Activated CD4-positive, alpha-beta T cell treated with anti-CD3 and anti-CD28 coated beads, Interleukin-2, amount 10 ng/mL, durations not matched to agents 24 days and 14 days (primary cell): ENCODE measurements at regions of chrX and their contacts with region 1.

Region 1: GRCh38 chrX:65706041-65706828 is 38.8 kb downstream of the MSN start:
- DNase-seq: peak; percentile 66
- H3K4me3 Mint-ChIP-seq: peak overlapping the region; percentile 51
- H3K27ac Mint-ChIP-seq: peak overlapping the region; percentile 92
- H3K4me1 Mint-ChIP-seq: peaks cover 49% of the 10 kb centered on the region
- H3K27me3 Mint-ChIP-seq: no peaks in the 10 kb centered on the region

Region 2: DNA sequence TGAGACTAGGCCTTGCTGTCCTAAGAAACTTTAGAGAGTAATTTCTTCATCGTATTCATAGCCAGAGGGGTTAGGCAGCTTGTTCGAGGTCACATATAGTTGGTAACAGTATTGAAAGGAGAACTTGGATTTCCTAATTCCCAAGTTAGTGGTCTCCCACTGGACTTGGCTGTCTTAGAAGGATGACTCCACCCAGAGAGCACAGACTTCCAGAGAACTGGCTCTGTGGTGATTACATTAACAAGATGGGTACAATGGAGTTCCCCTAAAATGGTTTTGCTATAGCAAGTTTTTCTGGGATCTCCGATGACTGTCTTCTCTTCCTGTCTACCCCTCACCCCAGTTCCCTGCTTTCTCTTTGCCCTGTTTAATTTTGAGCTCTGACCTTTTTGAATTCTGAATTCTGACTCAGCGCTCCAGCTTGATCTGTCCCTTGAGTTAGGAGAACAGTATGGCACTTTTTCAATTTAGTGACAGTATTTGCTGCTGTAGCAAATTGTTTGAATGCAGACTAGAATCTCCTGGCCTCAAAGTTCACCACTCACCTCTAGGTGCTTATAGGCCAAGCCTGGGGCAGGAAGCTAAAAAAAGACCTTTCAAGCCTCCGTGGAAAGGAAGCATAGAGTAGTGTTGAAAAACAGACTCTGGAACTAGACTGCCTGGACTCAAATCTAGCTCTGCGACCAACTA is 31.9 kb before region 1 on chrX:
- intact Hi-C with region 1: loop called (anchors 1 kb)
- DNase-seq: peak; percentile 73
- H3K4me3 Mint-ChIP-seq: peak overlapping the region; percentile 97
- H3K27ac Mint-ChIP-seq: peak overlapping the region; percentile 88
- H3K4me1 Mint-ChIP-seq: peaks cover 58% of the 10 kb centered on the region
- H3K27me3 Mint-ChIP-seq: no peaks in the 10 kb centered on the region

Region 3: DNA sequence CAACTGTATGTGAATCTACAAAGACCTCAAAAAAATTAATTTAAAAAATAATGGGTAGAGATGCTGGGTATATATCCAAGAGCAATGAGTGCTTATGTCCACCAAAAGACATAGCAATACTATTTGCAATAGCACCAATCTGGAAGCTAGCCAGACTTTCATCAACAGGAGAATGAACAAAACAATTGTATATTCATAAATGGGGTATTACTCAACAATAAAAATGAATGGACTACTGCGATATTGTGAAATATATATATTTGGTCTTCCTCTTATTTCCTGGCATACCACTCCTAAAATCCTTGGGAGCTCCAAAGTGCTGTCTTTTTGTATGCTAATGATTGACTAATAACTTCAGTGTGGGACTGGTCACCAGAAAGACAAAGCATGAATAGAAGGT is 38.7 kb after region 1 on chrX:
- intact Hi-C with region 1: loop called (anchors 5 kb)
- DNase-seq: no peak
- H3K4me3 Mint-ChIP-seq: no peak overlapping the region
- H3K27ac Mint-ChIP-seq: no peak overlapping the region
- H3K4me1 Mint-ChIP-seq: peaks cover 36% of the 10 kb centered on the region
- H3K27me3 Mint-ChIP-seq: no peaks in the 10 kb centered on the region

Region 4: GRCh38 chrX:66030505-66031317 is 324.5 kb after region 1 on chrX:
- intact Hi-C with region 1: no loop called
- DNase-seq: peak; percentile 71
- H3K4me3 Mint-ChIP-seq: no peak overlapping the region
- H3K27ac Mint-ChIP-seq: no peak overlapping the region
- H3K4me1 Mint-ChIP-seq: peaks cover 8% of the 10 kb centered on the region
- H3K27me3 Mint-ChIP-seq: no peaks in the 10 kb centered on the region